ENCODE measurements at regions of chr22 and their contacts with region 1.

Region 1: GRCh38 chr22:30356449-30357235 is at the starts of genes CCDC157 and SF3A1:
- DNase-seq: peak; percentile 93
- ATAC-seq: peak; percentile 94
- H3K4me3 Mint-ChIP-seq: peak within 1 kb of the TSS; percentile 94
- H3K27ac Mint-ChIP-seq: peak within 1 kb of the TSS; percentile 82
- H3K4me1 Mint-ChIP-seq: peaks cover 39% of the 10 kb centered on the region
- H3K27me3 Mint-ChIP-seq: no peaks in the 10 kb centered on the region
- total RNA-seq, gene CCDC157: 4.0 to 4.7 TPM
- total RNA-seq, gene SF3A1: 220 to 233 TPM

Region 2: DNA sequence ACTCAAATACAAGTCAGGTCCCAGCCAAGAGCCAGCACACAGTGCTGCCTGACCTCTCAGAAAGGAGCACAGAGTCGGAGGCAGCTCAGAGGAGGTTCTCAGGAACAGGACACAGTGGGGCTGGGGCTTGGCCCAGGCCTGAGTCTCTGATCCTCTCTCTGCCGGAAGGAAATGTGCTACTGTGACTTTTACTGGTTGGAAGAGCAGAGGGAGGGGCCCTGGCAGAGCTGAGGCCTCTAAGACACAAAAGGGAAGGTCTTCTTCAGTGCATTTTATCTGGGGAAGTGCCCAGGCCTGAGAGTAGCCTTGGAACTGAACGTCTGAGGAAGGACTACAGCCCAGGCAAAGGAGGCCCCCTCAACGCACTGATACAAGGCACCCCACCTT is 51.1 kb before region 1 on chr22:
- POLR2A ChIA-PET with region 1: interaction called, 25 read pairs
- DNase-seq: peak; percentile 66
- ATAC-seq: peak; percentile 85
- H3K4me3 Mint-ChIP-seq: peak overlapping the region; percentile 73
- H3K27ac Mint-ChIP-seq: peak overlapping the region; percentile 80
- H3K4me1 Mint-ChIP-seq: peaks cover 87% of the 10 kb centered on the region
- H3K27me3 Mint-ChIP-seq: no peaks in the 10 kb centered on the region